WTC11 (cell line): ENCODE measurements at regions of chr12 and their contacts with region 1.

Region 1: GRCh38 chr12:98470469-98471082 is 44.8 kb upstream of the TMPO start:
- DNase-seq: no peak
- ATAC-seq: no peak
- H3K4me3 Mint-ChIP-seq: no peak overlapping the region
- H3K27ac Mint-ChIP-seq: no peak overlapping the region
- H3K4me1 Mint-ChIP-seq: no peaks in the 10 kb centered on the region
- H3K27me3 Mint-ChIP-seq: no peaks in the 10 kb centered on the region
- CTCF ChIP-seq: no peak

Region 2: GRCh38 chr12:98352218-98352811 is 118.3 kb before region 1 on chr12:
- CTCF ChIA-PET with region 1: no interaction called
- POLR2A ChIA-PET with region 1: interaction called, 10 read pairs
- DNase-seq: no peak
- ATAC-seq: no peak
- H3K4me3 Mint-ChIP-seq: no peak overlapping the region
- H3K27ac Mint-ChIP-seq: no peak overlapping the region
- H3K4me1 Mint-ChIP-seq: peaks cover 25% of the 10 kb centered on the region
- H3K27me3 Mint-ChIP-seq: no peaks in the 10 kb centered on the region
- CTCF ChIP-seq: no peak